Activated CD8-positive, alpha-beta memory T cell treated with anti-CD3 and anti-CD28 coated beads, Interleukin-2, amount 10 ng/mL, durations not matched to agents 7 days and 5 days (primary cell): ENCODE measurements at regions of chr2 and their contacts with region 1.

Region 1: GRCh38 chr2:204145263-204145751 is 208.7 kb downstream of the ICOS start:
- DNase-seq: peak; percentile 86
- ATAC-seq: peak; percentile 99
- H3K4me3 Mint-ChIP-seq: peak overlapping the region; percentile 69
- H3K27ac Mint-ChIP-seq: peak overlapping the region; percentile 65
- H3K4me1 Mint-ChIP-seq: peaks cover 13% of the 10 kb centered on the region
- H3K27me3 Mint-ChIP-seq: peaks cover 39% of the 10 kb centered on the region

Region 2: GRCh38 chr2:204072443-204073324 is 72.6 kb before region 1 on chr2:
- CTCF ChIA-PET with region 1: interaction called, 10 read pairs
- DNase-seq: peak; percentile 73
- ATAC-seq: peak; percentile 71
- H3K4me3 Mint-ChIP-seq: no peak overlapping the region
- H3K27ac Mint-ChIP-seq: no peak overlapping the region
- H3K4me1 Mint-ChIP-seq: no peaks in the 10 kb centered on the region
- H3K27me3 Mint-ChIP-seq: peaks cover 19% of the 10 kb centered on the region

Region 3: DNA sequence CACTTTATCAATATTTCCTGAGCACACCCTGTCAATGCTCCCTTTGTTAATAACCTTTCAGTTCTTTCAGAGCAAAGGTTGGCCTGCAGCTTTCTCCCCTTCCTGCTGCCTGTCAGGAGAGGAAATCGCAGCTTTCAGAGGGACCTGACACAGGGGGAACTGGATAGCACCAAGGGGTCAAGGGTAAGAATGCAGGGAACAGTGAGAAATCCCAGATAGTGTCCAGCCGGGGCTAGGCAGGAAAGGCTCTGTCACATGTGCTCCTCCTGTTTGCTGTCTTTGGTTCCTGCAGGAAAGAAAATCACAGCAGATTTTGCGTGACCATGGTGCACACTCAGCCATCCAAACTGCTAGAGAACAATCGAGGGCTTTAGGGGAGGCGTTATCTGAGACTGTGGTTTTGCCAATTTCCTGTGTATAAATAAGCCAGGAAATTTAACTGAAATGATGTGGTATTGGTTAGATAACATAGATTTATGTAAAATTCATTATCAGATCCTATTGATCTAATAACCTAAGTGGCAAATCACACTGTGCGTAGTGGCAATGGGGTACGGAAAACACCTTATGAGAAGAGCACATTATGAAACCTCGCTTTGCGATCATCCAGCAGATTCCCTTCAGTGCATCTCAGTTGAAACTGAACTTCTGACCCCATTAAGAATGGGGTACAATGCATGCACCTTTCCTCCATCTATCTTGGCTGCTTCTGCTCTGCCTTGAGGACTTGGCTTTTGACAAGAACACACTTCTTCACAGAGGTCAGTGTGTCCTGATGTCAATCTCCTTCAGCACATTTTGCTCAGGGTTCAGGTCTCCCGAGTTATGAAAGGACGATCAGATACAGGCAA is 30.8 kb before region 1 on chr2:
- CTCF ChIA-PET with region 1: interaction called, 13 read pairs
- DNase-seq: no peak
- ATAC-seq: no peak
- H3K4me3 Mint-ChIP-seq: no peak overlapping the region
- H3K27ac Mint-ChIP-seq: no peak overlapping the region
- H3K4me1 Mint-ChIP-seq: peaks cover 39% of the 10 kb centered on the region
- H3K27me3 Mint-ChIP-seq: peaks cover 16% of the 10 kb centered on the region

Region 4: GRCh38 chr2:204159526-204159925 is 14.2 kb after region 1 on chr2:
- CTCF ChIA-PET with region 1: interaction called, 10 read pairs
- DNase-seq: no peak
- ATAC-seq: no peak
- H3K4me3 Mint-ChIP-seq: no peak overlapping the region
- H3K27ac Mint-ChIP-seq: no peak overlapping the region
- H3K4me1 Mint-ChIP-seq: no peaks in the 10 kb centered on the region
- H3K27me3 Mint-ChIP-seq: peaks cover 5% of the 10 kb centered on the region